PC-3 (cell line): ENCODE measurements at regions of chr22 and their contacts with region 1.

Region 1: DNA sequence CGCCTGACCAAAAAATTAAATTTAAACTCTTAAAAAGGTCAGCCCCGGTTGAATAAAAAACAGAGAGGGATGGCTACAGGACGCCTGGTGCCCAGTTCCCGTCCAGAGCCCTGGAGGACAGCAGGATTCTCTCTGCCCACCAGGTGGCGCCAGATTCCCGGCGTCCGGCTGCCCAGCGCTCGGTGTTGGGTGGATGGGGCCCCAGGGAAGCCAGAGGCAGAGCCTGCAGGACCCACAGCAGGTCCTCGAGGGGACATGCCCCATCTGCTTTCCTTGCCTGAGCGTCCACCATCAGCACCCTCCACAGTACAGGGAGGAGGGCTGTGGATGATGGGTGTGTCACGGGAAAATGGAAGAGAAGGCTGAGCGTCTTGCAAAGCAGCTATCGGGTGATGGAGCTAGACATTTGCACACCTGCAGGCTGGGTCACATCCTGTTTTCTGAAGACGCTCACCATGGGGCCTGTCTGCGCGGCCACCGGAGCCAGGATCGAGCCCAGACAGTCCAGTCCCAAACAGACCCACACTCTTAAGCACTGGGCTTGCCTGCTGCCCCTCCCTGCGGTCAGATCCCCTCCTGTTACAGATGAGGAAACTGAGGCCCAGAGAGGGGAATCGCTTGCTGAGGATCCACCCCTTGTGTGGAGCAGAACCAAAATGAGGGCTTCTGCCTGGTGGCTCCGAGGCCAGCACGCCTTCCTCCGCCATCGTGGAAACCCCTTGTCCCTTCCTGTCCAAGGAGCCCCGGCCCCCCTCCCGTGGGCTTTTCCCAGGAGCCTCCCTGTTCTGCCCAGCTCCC is 18.5 kb upstream of the CBX7 start:
- DNase-seq: peak; percentile 77
- ATAC-seq: peak; percentile 77
- H3K4me3 ChIP-seq: no peak overlapping the region
- H3K27ac ChIP-seq: no peak overlapping the region
- H3K4me1 ChIP-seq: peaks cover 32% of the 10 kb centered on the region
- H3K27me3 ChIP-seq: no peaks in the 10 kb centered on the region
- CTCF ChIP-seq: peak; percentile 81

Region 2: DNA sequence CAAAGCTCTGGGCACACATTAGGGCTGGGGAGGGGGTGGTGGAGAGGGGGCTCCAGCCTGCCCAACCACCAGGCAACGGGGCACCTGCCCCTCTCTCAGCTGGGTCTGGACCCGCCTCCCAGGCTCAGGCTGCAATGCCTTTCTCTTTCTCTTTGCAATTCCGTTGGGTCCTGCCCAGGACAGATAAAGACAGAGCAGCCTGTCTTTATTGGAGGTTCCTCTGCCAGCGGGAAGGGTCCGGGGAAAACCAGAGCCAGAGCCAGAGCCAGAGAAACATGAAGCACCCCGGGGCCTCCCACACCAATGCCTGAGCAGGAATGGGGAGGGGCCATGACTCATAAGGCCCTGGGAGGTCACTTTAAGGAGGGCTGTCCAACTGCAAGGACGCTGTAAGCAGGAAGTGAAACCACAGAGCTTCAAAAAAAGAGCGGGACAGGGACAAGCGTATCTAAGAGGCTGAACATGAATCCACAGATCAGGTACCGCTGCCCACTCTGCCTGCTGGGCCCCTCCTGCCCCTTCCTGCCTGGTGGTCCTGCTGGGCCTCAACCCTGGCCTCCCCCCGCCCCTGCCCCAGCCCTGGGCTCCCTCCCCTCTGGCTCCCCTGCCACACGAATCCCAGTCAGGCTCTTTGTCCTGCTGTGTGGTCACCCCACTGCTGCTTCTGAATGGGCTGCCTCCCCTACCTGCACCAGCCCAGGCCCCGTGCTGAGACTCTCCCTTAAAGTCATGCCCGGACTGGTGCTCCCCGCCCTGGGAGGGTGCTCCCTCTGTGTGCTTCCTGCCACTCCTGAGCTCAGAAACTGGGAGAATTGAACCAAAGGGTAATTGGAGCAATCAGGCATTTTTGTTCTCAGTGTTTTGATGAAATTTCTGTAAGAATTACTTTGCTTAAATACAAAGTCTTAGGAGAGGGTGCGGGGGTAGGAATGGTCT is 188.8 kb before region 1 on chr22 and contains the start of gene APOBEC3B:
- CTCF ChIA-PET with region 1: no interaction called
- POLR2A ChIA-PET with region 1: no interaction called
- intact Hi-C with region 1: no loop called
- DNase-seq: peak; percentile 91
- ATAC-seq: peak; percentile 91
- H3K4me3 ChIP-seq: peak within 1 kb of the TSS; percentile 58
- H3K27ac ChIP-seq: peak within 1 kb of the TSS; percentile 79
- H3K4me1 ChIP-seq: peaks cover 26% of the 10 kb centered on the region
- H3K27me3 ChIP-seq: no peaks in the 10 kb centered on the region
- CTCF ChIP-seq: no peak
- total RNA-seq, gene APOBEC3B: 11.3 TPM in 2 replicates

Region 3: DNA sequence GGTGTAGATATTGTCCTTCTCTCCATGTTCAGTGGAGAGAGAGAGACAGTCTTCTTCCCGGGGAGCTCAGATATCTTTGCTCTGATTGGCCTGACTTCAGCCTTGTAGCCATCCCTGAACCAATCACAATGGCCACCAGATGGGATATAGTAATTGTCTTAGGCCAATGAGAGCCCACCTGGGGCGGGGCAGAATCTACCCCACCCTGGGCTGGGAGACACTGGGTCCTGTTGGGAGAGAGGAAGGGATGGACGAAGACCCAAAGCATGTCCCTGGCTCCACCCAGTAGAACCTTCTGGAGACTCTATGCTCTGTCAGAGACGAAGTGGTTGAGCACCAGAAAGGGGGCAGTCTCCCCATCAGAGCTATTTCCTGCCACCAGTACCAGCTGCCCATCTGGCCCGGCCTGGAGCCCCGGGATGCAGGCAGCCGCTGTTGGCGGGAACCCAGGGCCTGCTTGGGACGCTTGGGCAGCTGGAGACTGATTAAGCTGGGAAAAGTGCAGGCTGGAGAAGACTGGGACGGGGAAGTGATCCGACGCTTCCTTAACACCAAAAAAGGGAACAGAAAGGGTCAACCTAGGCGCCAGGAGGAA is 13.1 kb after region 1 on chr22:
- CTCF ChIA-PET with region 1: no interaction called
- POLR2A ChIA-PET with region 1: no interaction called
- intact Hi-C with region 1: no loop called
- DNase-seq: peak; percentile 3
- ATAC-seq: no peak
- H3K4me3 ChIP-seq: no peak overlapping the region
- H3K27ac ChIP-seq: no peak overlapping the region
- H3K4me1 ChIP-seq: peaks cover under 1% of the 10 kb centered on the region; the same call in 1 of the 2 replicates
- H3K27me3 ChIP-seq: no peaks in the 10 kb centered on the region
- CTCF ChIP-seq: no peak

Region 4: GRCh38 chr22:39215426-39216120 is 44.5 kb after region 1 on chr22:
- CTCF ChIA-PET with region 1: no interaction called
- POLR2A ChIA-PET with region 1: interaction called, 4 read pairs
- intact Hi-C with region 1: loop called (anchors 2 kb)
- DNase-seq: no peak
- ATAC-seq: no peak
- H3K4me3 ChIP-seq: no peak overlapping the region
- H3K27ac ChIP-seq: peak overlapping the region; percentile 57; the same call in 1 of the 2 replicates
- H3K4me1 ChIP-seq: peaks cover 36% of the 10 kb centered on the region
- H3K27me3 ChIP-seq: no peaks in the 10 kb centered on the region
- CTCF ChIP-seq: peak; percentile 47

Region 5: DNA sequence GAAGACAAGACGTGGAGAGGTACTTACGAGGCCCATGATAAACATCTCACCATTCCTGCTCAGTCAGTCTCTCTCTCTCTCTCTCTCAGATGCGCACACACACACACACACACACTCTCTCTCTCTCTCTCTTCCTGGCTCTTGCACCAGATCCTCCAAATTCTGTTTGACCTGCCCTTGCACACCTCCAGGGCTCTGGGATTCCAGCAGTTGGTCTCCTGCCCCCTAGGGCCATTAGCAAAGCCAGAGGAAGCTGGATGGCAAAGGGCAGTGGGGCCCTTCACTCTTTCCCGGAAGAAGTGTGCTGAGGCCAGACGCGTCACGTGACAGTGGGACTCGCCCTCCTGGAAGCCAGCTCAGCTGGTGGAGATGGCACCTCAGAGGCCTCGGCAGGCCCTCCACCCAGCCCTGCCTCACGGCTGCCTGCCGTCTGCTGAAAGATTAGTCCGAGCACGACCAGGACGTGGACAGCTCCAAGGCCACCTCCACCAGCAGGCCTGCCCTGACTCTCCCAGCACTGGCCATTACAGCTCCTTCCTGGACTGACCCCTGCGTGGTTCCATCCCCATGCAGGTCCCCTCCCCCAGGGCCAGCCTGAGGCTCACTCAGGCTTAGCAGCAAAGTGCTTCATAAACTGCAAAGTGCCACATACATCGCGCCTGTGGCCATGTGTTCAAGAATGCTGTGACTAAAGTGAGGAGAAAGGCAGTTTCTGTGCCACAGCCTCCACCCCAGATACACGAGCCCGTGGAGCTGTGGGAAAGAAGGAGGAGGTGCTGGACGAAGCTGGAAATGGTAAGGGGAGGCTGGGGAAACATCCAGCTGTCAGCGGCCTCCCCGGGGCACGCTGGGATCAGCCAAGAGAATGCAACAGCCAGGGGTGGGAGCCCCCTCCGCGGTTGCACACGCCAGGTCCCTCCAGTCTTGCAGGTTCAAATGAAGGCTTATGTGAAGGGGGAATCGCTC is 70.1 kb after region 1 on chr22:
- CTCF ChIA-PET with region 1: interaction called, 4 read pairs
- POLR2A ChIA-PET with region 1: no interaction called
- intact Hi-C with region 1: loop called (anchors 2 kb)
- DNase-seq: peak; percentile 49
- ATAC-seq: no peak
- H3K4me3 ChIP-seq: peak overlapping the region; percentile 95
- H3K27ac ChIP-seq: peak overlapping the region; percentile 43
- H3K4me1 ChIP-seq: peaks cover 33% of the 10 kb centered on the region
- H3K27me3 ChIP-seq: no peaks in the 10 kb centered on the region
- CTCF ChIP-seq: no peak